K562 (cell line): ENCODE measurements at regions of chr2 and their contacts with region 1.

Region 1: DNA sequence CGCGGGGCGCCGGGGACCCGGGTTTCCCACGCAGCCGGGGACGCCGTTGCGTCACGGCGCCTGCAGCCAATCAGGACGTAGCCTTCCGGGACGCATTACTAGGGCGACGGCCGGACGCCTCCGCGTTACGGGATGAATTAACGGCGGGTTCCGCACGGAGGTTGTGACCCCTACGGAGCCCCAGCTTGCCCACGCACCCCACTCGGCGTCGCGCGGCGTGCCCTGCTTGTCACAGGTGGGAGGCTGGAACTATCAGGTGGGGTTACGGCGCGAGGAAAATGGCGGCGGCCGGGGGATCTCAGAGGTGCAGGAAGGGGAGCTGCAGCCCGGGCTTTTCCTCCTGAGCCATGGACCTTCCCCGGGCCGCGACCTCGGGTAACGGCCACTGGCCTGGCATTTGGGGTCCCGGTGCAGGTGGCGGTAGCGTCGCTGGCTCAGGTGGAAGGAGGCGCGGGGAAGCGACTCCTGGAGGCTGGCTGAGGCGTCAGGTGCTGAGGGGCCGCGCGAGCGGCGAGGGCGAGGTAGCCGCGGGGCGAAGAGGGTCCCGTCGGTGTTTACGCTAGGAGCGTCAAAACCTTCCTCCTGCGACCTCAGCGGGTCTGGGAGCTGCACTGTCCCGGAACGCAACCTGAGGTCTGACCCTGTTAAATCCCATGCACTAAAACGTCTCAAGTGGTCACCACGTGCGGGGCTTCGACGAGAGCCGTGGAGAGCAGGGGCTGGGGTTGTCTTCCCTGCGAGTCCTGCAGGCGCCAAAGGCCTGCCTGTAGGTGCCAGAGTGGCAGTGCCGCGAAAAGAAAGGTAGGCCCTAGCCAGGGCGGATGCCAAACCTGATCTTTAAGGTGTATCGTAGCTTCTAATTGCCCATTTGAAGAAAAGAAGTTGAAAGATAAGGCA is at the start of gene LCLAT1:
- DNase-seq: peak; percentile 92 to 95 (median 94)
- ATAC-seq: peak; percentile 96
- H3K4me3 ChIP-seq: peak within 1 kb of the TSS; percentile 57
- H3K27ac ChIP-seq: peak within 1 kb of the TSS; percentile 79
- H3K4me1 ChIP-seq: peaks cover 19 to 25% of the 10 kb centered on the region in 2 experiments
- H3K27me3 ChIP-seq: no peaks in the 10 kb centered on the region
- CTCF ChIP-seq: 0 out of 6 replicates have a peak, but pooled peaks of 1 of the 3 experiments have one; percentile 16
- EP300 ChIP-seq: no peak
- POLR2A ChIP-seq: peak; percentile 79
- RAD21 ChIP-seq: no peak
- polyA plus RNA-seq, gene LCLAT1: 29.4 to 63.3 TPM

Region 2: GRCh38 chr2:30231212-30231995 is 216.0 kb before region 1 on chr2 and contains the start of gene LBH:
- CTCF ChIA-PET with region 1: no interaction called
- POLR2A ChIA-PET with region 1: interaction called, 6 read pairs
- in situ Hi-C with region 1: no loop called
- intact Hi-C with region 1: loop called (anchors 10 kb)
- DNase-seq: peak; percentile 90 to 95 (median 93)
- ATAC-seq: peak; percentile 86
- H3K4me3 ChIP-seq: peak within 1 kb of the TSS; percentile 61
- H3K27ac ChIP-seq: peak within 1 kb of the TSS; percentile 58
- H3K4me1 ChIP-seq: peaks cover 23 to 33% of the 10 kb centered on the region in 2 experiments; a peak in 4 of 5 replicates
- H3K27me3 ChIP-seq: no peaks in the 10 kb centered on the region
- CTCF ChIP-seq: peak in 1 of 3 experiments; percentile 27; a peak in 2 of 6 replicates
- EP300 ChIP-seq: no peak
- POLR2A ChIP-seq: peak; percentile 94
- RAD21 ChIP-seq: peak in 1 of 2 experiments; percentile 28; a peak in 2 of 4 replicates
- polyA plus RNA-seq, gene LBH: 3.1 to 5.9 TPM

Region 3: GRCh38 chr2:30436859-30437435 is 10.4 kb before region 1 on chr2:
- CTCF ChIA-PET with region 1: no interaction called
- POLR2A ChIA-PET with region 1: interaction called, 11 read pairs
- in situ Hi-C with region 1: no loop called
- intact Hi-C with region 1: no loop called
- DNase-seq: no peak
- ATAC-seq: no peak
- H3K4me3 ChIP-seq: no peak overlapping the region
- H3K27ac ChIP-seq: no peak overlapping the region
- H3K4me1 ChIP-seq: peaks cover 0 to 19% of the 10 kb centered on the region in 2 experiments; a peak in 3 of 5 replicates
- H3K27me3 ChIP-seq: no peaks in the 10 kb centered on the region
- CTCF ChIP-seq: no peak
- EP300 ChIP-seq: no peak
- POLR2A ChIP-seq: no peak
- RAD21 ChIP-seq: no peak

Region 4: DNA sequence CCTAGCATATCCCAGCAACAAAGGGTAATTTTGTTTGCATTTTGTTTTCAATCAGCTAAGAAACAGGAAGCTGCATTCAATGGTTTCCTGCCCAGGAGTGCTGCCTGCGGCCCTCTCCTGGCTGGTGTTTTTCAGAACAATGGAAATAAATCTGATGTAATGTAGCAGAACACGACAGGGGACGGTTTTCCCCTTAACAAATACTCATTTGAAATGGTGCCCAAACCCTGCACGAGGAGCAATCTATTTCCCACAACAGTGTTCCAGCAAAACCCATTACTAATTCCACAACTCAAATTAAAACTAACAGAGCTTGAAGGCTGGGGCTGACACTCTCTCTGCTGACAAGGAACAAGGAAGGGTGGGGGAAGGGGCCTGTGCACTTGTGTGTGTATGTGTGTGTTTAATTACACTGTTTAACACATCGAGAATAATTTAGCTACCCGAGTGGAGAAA is 351.2 kb after region 1 on chr2:
- CTCF ChIA-PET with region 1: no interaction called
- POLR2A ChIA-PET with region 1: no interaction called
- in situ Hi-C with region 1: no loop called
- intact Hi-C with region 1: no loop called
- DNase-seq: no peak
- ATAC-seq: no peak
- H3K4me3 ChIP-seq: no peak overlapping the region
- H3K27ac ChIP-seq: no peak overlapping the region
- H3K4me1 ChIP-seq: no peaks in the 10 kb centered on the region
- H3K27me3 ChIP-seq: peaks cover 3 to 28% of the 10 kb centered on the region in 2 experiments; a peak in 3 of 5 replicates
- CTCF ChIP-seq: no peak
- EP300 ChIP-seq: no peak
- POLR2A ChIP-seq: no peak
- RAD21 ChIP-seq: no peak